Endothelial cell of umbilical vein (primary cell): ENCODE measurements at regions of chr17 and their contacts with region 1.

Region 1: GRCh38 chr17:32634167-32634566 is 147.4 kb downstream of the CDK5R1 start:
- DNase-seq: no peak
- H3K4me3 ChIP-seq: no peak overlapping the region
- H3K27ac ChIP-seq: no peak overlapping the region
- H3K4me1 ChIP-seq: no peaks in the 10 kb centered on the region
- H3K27me3 ChIP-seq: no peaks in the 10 kb centered on the region
- CTCF ChIP-seq: no peak
- POLR2A ChIP-seq: no peak

Region 2: DNA sequence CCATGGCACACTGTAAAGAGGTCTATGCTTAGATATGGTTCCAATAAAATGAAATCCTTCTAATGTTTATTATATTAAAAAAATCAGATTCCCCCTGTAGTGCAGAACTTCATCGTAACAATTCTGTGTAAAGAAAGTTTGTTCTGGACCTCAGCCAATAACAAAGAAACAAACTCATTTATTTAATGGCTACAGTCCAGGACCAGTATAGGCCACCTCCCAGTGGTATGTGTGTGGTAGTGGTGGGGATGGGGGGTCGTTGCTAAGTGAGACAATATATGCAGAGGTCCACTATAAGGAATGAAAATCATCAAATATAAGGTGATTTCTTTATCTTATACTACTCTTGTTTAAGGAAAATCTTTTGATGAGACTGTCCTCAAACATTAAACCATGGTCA is 11.0 kb before region 1 on chr17:
- CTCF ChIA-PET with region 1: no interaction called
- POLR2A ChIA-PET with region 1: no interaction called
- dilution Hi-C with region 1: no loop called
- intact Hi-C with region 1: loop called (anchors 1 kb)
- DNase-seq: peak; percentile 49
- H3K4me3 ChIP-seq: no peak overlapping the region
- H3K27ac ChIP-seq: no peak overlapping the region
- H3K4me1 ChIP-seq: peaks cover 12% of the 10 kb centered on the region
- H3K27me3 ChIP-seq: no peaks in the 10 kb centered on the region
- CTCF ChIP-seq: no peak
- POLR2A ChIP-seq: no peak